ENCODE measurements at regions of chr18 and their contacts with region 1.

Region 1: DNA sequence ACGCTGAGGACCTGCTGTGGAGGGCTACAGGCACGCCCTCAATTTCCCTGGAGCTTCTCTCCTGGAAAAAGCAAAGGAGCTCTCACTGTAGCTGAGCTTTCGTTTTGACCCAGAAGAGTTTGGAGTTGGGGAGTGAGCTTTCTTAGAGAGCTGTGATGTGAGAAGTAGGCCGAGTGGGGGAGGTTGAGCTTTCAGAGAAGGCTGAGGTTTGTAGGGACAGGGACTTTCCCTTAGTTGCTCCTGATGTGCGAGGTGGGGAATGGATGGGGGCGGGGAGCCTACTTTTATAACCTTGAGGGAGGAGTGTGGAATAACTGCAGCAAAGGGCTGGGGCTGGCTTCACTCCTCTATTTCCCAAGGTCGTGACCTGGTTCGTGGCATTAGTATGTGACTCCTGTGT is 47.1 kb downstream of the ZNF532 start:
- DNase-seq: peak; percentile 62
- H3K4me3 ChIP-seq: no peak overlapping the region
- H3K27ac ChIP-seq: no peak overlapping the region
- H3K4me1 ChIP-seq: peaks cover 32% of the 10 kb centered on the region
- H3K27me3 ChIP-seq: no peaks in the 10 kb centered on the region
- CTCF ChIP-seq: no peak
- POLR2A ChIP-seq: no peak

Region 2: DNA sequence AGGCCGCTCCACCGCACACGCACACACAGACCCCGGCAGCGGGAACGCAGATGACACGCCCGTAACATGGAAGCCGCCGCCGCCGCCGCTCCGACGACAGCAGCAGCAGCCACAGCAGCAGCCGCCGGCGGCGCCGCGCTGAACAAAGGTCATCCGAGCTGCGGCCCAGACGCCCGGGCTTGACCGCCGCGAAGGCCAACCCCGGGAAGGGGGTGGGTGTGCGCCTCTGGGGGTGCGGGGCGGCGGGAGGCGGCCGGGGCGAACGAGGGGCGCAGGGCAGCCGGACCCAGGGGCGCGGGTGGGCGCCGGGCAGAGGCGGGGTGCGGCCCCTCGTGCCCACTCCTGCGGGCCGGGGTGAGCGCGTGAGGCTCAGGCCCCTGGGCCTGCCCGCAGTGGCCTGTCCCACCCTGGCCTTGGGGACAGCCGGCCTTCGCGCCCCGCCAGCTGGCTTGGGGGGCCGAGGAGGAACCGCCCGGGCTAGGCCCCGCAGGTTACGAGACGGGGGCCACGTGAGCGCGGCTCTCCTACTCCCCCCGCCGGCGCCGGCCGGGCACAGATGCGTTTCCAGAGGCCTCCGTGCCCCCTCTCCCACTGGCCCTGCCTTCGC is 48.1 kb before region 1 on chr18:
- CTCF ChIA-PET with region 1: no interaction called
- POLR2A ChIA-PET with region 1: no interaction called
- dilution Hi-C with region 1: no loop called
- intact Hi-C with region 1: loop called (anchors 2 kb)
- DNase-seq: peak; percentile 31
- H3K4me3 ChIP-seq: peak overlapping the region in 1 of 3 experiments; percentile 39
- H3K27ac ChIP-seq: peak overlapping the region; percentile 77
- H3K4me1 ChIP-seq: peaks cover 38% of the 10 kb centered on the region
- H3K27me3 ChIP-seq: no peaks in the 10 kb centered on the region
- CTCF ChIP-seq: peak in 1 of 2 donors; percentile 27
- POLR2A ChIP-seq: no peak

Region 3: DNA sequence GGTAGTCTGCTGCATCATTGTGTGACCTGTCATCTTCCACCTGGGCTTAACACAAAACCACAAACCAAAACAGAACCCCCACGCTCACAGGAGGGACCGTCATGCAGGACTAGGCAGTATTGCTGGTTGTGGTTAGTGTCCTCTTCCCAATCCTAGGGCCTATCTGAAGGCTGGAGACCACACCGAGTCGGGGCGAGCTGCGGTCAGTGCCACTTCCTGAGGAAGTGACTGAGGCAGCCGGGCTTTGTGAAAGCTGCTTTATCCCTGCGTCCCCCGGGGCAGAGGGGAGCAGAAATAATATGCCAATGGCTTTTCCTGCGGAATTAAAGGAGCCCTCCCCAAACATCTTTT is 24.2 kb before region 1 on chr18:
- CTCF ChIA-PET with region 1: no interaction called
- POLR2A ChIA-PET with region 1: no interaction called
- dilution Hi-C with region 1: no loop called
- intact Hi-C with region 1: loop called (anchors 2 kb)
- DNase-seq: peak; percentile 78
- H3K4me3 ChIP-seq: no peak overlapping the region
- H3K27ac ChIP-seq: peak overlapping the region; percentile 43
- H3K4me1 ChIP-seq: peaks cover 18% of the 10 kb centered on the region
- H3K27me3 ChIP-seq: no peaks in the 10 kb centered on the region
- CTCF ChIP-seq: no peak
- POLR2A ChIP-seq: peak; percentile 42

Region 4: DNA sequence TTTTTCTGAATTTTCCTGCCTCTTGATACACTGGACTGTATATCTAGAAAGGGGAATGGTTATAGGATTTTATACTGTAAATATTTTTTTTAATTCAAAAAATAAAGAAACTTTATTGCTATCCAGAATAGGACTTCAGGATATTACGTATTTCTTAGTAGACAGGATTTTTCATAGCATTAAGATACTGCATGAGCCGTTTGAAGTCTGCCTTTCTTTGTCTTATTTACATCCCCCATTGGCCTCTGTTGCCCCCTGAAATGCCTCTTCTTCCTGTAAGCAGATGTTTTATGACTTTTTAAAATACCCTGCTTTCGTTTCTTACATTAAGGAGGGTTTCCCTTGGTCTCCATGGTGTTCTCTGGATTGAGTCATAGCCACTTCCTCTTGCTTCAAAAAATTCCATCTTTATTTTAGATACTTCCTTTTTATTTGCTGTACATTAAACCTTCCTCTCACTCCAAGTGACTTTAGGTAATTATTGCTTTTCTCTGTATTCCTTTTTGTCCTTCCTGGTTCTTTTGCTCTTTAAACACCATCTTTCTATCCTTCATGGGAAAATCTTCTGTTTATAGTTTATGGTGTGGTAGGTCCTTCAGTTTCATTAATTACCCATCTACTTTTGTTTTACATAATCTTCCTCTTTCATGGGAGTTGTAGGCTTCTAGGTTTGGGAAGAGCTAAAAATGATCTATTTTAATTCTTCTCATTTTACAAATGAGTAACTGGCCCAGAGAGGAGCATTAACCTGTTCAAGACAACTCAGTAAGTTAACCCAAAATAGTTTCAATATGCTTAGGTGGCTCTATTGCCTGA is 25.5 kb after region 1 on chr18:
- CTCF ChIA-PET with region 1: interaction called, 3 read pairs
- POLR2A ChIA-PET with region 1: no interaction called
- dilution Hi-C with region 1: no loop called
- intact Hi-C with region 1: loop called (anchors 1 kb)
- DNase-seq: peak; percentile 87
- H3K4me3 ChIP-seq: peak overlapping the region in 1 of 3 experiments; percentile 34
- H3K27ac ChIP-seq: peak overlapping the region; percentile 60
- H3K4me1 ChIP-seq: peaks cover 18% of the 10 kb centered on the region
- H3K27me3 ChIP-seq: no peaks in the 10 kb centered on the region
- CTCF ChIP-seq: no peak
- POLR2A ChIP-seq: no peak